Transverse colon (tissue), 4 donors: ENCODE measurements at regions of chr11 and their contacts with region 1.

Region 1: GRCh38 chr11:46308631-46309419 is 31.4 kb downstream of the CREB3L1 start:
- DNase-seq: peak; percentile 81
- H3K4me3 ChIP-seq: no peak overlapping the region
- H3K27ac ChIP-seq: no peak overlapping the region
- H3K4me1 ChIP-seq: peaks cover 0 to 7% (median 0%) of the 10 kb centered on the region in 4 donors
- H3K27me3 ChIP-seq: no peaks in the 10 kb centered on the region
- CTCF ChIP-seq: peak; percentile 83 to 90 (median 89)
- EP300 ChIP-seq: no peak
- POLR2A ChIP-seq: no peak

Region 2: GRCh38 chr11:45147017-45147728 is 1161.7 kb before region 1 on chr11:
- in situ Hi-C with region 1: no loop called
- intact Hi-C with region 1: loop called (anchors 5 kb)
- DNase-seq: peak; percentile 96
- H3K4me3 ChIP-seq: peak overlapping the region; percentile 38 to 70 (median 54)
- H3K27ac ChIP-seq: peak overlapping the region; percentile 95 to 99 (median 99)
- H3K4me1 ChIP-seq: peaks cover 8 to 24% (median 18%) of the 10 kb centered on the region in 4 donors
- H3K27me3 ChIP-seq: no peaks in the 10 kb centered on the region
- CTCF ChIP-seq: no peak
- EP300 ChIP-seq: no peak
- POLR2A ChIP-seq: peak; percentile 78

Region 3: DNA sequence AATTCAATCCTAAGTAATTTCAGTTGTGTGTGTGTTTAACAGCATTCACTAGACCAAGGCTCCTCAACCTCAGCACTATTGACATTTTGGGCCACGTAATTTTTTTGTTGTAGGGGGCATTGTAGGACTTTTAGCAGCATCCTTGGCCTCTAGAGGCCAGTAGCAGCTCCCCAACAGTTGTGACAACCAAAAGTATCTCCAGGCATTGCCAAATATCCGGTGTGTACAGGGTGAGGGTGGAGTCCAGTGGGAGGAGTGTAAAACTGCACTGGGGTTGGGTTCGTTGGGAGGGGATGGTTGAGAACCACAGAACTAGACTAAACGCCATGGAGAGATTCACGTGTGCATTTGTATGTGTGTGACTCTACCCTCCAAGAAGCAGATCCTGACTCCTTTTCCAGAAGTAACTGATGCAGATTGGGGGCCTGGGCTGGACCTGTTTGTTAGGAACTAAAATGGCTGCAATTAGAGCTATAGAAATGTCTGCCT is 181.6 kb before region 1 on chr11:
- in situ Hi-C with region 1: loop called in 1 of 4 experiments (anchors 25 kb)
- intact Hi-C with region 1: no loop called
- DNase-seq: peak; percentile 47
- H3K4me3 ChIP-seq: no peak overlapping the region
- H3K27ac ChIP-seq: no peak overlapping the region
- H3K4me1 ChIP-seq: peaks cover 0 to 10% (median 2%) of the 10 kb centered on the region in 4 donors
- H3K27me3 ChIP-seq: no peaks in the 10 kb centered on the region
- CTCF ChIP-seq: peak in 3 of 5 experiments; percentile 5 to 12 (median 10)
- EP300 ChIP-seq: no peak
- POLR2A ChIP-seq: no peak

Region 4: DNA sequence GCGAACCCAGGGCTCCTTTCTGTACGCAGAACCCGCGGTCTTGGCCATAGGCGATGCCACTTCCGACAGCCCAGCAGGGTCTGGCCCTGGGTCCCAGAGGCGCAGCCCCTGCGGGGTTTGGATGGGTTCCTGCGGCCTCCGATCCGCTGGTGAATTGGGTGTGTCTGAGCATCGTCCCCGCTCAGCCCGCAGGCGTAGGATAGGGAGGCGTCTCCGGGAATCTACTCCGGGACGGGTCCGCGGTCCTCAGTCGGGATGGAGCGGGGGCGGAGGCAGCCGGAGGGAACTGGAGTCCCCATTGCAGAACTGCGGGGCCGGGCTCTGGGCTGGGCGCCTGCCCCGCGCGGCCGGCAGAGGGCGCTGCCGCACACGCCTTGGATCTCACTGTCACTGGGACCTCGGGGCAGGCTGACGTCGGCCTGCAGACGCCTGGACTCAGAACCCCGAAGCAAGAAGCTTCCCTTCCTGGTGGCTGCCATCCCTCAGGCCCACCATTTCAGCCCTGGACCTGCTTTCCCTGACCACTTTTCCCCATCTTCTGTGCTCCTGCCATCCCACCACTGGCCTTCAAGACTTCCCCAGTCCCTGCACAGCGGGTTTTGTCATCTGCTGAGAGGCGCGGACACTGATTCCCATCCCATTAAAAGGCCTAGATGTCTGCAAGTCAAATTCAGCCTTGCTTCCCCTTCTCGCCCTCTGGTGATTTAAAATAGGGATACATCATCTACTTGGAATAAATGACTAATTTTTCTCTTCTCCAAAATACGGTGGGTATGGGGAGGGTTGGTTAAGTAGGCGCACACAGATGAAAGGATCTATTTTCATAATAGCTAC is 69.6 kb before region 1 on chr11:
- in situ Hi-C with region 1: loop called (anchors 5 to 10 kb)
- intact Hi-C with region 1: loop called (anchors 1 kb)
- DNase-seq: peak; percentile 86
- H3K4me3 ChIP-seq: peak overlapping the region; percentile 7 to 55 (median 30)
- H3K27ac ChIP-seq: peak overlapping the region; percentile 64 to 86 (median 78)
- H3K4me1 ChIP-seq: peaks cover 17 to 43% (median 34%) of the 10 kb centered on the region in 4 donors
- H3K27me3 ChIP-seq: peaks cover 36% of the 10 kb centered on the region
- CTCF ChIP-seq: peak; percentile 96 to 100 (median 99)
- EP300 ChIP-seq: no peak
- POLR2A ChIP-seq: no peak

Region 5: GRCh38 chr11:46263109-46263508 is 45.7 kb before region 1 on chr11:
- in situ Hi-C with region 1: no loop called
- intact Hi-C with region 1: loop called (anchors 1 kb)
- DNase-seq: no peak
- H3K4me3 ChIP-seq: no peak overlapping the region
- H3K27ac ChIP-seq: no peak overlapping the region
- H3K4me1 ChIP-seq: no peaks in the 10 kb centered on the region
- H3K27me3 ChIP-seq: no peaks in the 10 kb centered on the region
- CTCF ChIP-seq: no peak
- EP300 ChIP-seq: no peak
- POLR2A ChIP-seq: no peak